CD4-positive, alpha-beta T cell (primary cell): ENCODE measurements at regions of chr9 and their contacts with region 1.

Region 1: GRCh38 chr9:23611869-23612268 is 214.2 kb downstream of the ELAVL2 start:
- DNase-seq: no peak
- ATAC-seq: no peak
- H3K4me3 ChIP-seq: no peak overlapping the region
- H3K4me3 Mint-ChIP-seq: no peak overlapping the region
- H3K27ac ChIP-seq: no peak overlapping the region
- H3K27ac Mint-ChIP-seq: no peak overlapping the region
- H3K4me1 ChIP-seq: no peaks in the 10 kb centered on the region
- H3K4me1 Mint-ChIP-seq: no peaks in the 10 kb centered on the region
- H3K27me3 ChIP-seq: no peaks in the 10 kb centered on the region
- H3K27me3 Mint-ChIP-seq: no peaks in the 10 kb centered on the region
- CTCF ChIP-seq: no peak

Region 2: GRCh38 chr9:23674016-23674585 is 62.2 kb after region 1 on chr9:
- CTCF ChIA-PET with region 1: no interaction called
- POLR2A ChIA-PET with region 1: no interaction called
- intact Hi-C with region 1: loop called in 1 of 2 experiments (anchors 10 kb)
- DNase-seq: no peak
- ATAC-seq: no peak
- H3K4me3 ChIP-seq: no peak overlapping the region
- H3K4me3 Mint-ChIP-seq: no peak overlapping the region
- H3K27ac ChIP-seq: no peak overlapping the region
- H3K27ac Mint-ChIP-seq: no peak overlapping the region
- H3K4me1 ChIP-seq: no peaks in the 10 kb centered on the region
- H3K4me1 Mint-ChIP-seq: no peaks in the 10 kb centered on the region
- H3K27me3 ChIP-seq: no peaks in the 10 kb centered on the region
- H3K27me3 Mint-ChIP-seq: no peaks in the 10 kb centered on the region
- CTCF ChIP-seq: no peak

Region 3: DNA sequence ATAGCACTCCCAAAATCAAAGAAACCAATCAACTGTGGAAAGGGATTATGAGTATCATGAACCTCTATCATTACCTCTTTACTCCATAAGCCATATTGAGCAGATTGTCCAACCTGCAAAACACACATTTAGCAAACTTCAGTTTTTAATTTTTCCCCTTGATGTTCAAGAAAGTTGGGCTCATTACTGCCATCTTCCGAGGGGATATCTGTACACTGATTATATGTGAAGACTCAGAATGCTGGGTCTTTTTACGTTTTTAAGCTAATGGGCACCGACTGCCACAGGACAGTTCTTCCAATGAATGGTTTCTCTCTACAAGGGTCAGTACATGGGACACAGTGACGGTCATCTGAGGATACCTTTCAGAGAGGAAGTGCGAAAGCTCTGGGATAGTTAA is 81.5 kb after region 1 on chr9:
- CTCF ChIA-PET with region 1: no interaction called
- POLR2A ChIA-PET with region 1: no interaction called
- intact Hi-C with region 1: no loop called
- DNase-seq: no peak
- ATAC-seq: no peak
- H3K4me3 ChIP-seq: no peak overlapping the region
- H3K4me3 Mint-ChIP-seq: no peak overlapping the region
- H3K27ac ChIP-seq: no peak overlapping the region
- H3K27ac Mint-ChIP-seq: no peak overlapping the region
- H3K4me1 ChIP-seq: no peaks in the 10 kb centered on the region
- H3K4me1 Mint-ChIP-seq: no peaks in the 10 kb centered on the region
- H3K27me3 ChIP-seq: no peaks in the 10 kb centered on the region
- H3K27me3 Mint-ChIP-seq: no peaks in the 10 kb centered on the region
- CTCF ChIP-seq: no peak